ENCODE measurements at regions of chr2 and their contacts with region 1.

Region 1: GRCh38 chr2:102355526-102356380 is at the start of gene IL18R1:
- DNase-seq: peak; percentile 68
- H3K4me3 Mint-ChIP-seq: peak within 1 kb of the TSS; percentile 98
- H3K27ac Mint-ChIP-seq: peak within 1 kb of the TSS; percentile 93
- H3K4me1 Mint-ChIP-seq: peaks cover 45% of the 10 kb centered on the region
- H3K27me3 Mint-ChIP-seq: no peaks in the 10 kb centered on the region
- total RNA-seq, gene IL18R1: 61.9 and 68.2 TPM in 2 replicates

Region 2: DNA sequence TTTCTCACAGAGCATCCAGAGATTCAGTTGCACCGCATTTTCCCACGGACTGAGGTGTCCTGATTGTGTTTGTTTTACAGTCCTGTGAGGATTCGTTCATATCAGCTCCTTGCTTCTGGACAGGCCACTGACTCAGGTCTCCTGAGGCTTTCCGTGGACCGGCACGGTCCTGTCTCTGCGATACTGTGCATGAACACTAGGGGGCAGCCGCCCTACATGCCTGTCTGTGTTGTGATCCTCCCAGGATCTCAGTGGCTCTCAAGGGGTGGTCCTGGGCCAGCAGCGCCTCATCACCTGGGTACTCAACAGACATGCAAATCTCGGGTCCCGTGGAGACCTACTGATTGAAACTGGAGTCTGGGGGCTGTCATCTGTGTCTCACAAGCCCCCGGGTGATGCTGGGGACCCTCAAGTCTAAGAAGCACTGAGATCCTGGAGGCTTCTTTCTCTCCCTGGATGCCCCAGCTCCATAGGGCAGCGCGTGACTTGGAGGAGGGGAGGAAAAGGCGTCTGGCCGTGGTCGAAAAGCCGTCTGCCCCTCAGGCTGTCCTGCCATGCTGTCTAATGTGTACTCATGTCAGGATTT is 335.1 kb before region 1 on chr2:
- intact Hi-C with region 1: loop called (anchors 2 kb)
- DNase-seq: peak; percentile 66
- H3K4me3 Mint-ChIP-seq: no peak overlapping the region
- H3K27ac Mint-ChIP-seq: no peak overlapping the region
- H3K4me1 Mint-ChIP-seq: peaks cover 12% of the 10 kb centered on the region
- H3K27me3 Mint-ChIP-seq: peaks cover 4% of the 10 kb centered on the region

Region 3: GRCh38 chr2:102301867-102302362 is 53.8 kb before region 1 on chr2:
- intact Hi-C with region 1: loop called (anchors 1 kb)
- DNase-seq: peak; percentile 55
- H3K4me3 Mint-ChIP-seq: peak overlapping the region; percentile 59
- H3K27ac Mint-ChIP-seq: peak overlapping the region; percentile 96
- H3K4me1 Mint-ChIP-seq: peaks cover 76% of the 10 kb centered on the region
- H3K27me3 Mint-ChIP-seq: no peaks in the 10 kb centered on the region

Region 4: DNA sequence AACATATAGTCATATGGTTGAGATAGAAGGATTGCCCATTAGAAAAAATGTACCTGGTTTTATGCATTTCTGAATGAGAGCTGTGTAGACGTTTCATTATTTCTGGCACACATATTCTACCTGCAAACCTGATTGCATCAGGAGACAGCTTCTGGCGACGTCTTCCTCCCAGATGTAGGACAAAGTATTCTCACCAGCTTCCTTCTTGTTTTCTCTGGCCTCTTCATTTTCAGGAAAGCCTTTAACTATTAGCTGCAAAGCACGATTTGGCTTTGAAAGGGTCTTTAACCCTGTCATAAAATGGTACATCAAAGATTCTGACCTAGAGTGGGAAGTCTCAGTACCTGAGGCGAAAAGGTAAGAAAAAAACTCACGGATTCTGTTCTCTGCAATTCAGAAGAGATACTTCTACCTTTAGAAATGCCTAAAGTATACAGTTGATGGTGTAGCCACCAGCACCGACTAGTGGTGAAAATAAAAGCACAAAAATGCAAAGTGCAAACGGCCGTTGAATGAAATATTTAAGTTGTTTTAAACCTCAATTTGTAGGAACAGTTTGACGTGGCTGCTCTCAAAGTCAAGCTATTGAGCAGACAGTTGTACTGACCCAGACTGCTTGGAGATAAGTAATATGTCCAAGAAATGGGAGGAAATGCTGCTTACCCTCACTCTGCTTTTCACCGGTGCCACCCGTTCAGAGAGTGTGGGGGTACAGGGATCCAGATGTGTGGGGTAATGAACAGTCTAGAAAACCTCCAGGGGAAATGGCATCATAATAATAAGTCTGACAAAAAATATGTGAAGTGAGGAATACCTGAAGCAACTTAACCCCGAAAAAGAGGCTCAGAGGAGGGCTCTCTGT is 87.4 kb after region 1 on chr2:
- intact Hi-C with region 1: loop called (anchors 2 kb)
- DNase-seq: peak; percentile 21
- H3K4me3 Mint-ChIP-seq: peak overlapping the region; percentile 33
- H3K27ac Mint-ChIP-seq: peak overlapping the region; percentile 47
- H3K4me1 Mint-ChIP-seq: peaks cover 13% of the 10 kb centered on the region
- H3K27me3 Mint-ChIP-seq: no peaks in the 10 kb centered on the region

Region 5: GRCh38 chr2:102449370-102449974 is 93.7 kb after region 1 on chr2:
- intact Hi-C with region 1: loop called (anchors 1 kb)
- DNase-seq: peak; percentile 50
- H3K4me3 Mint-ChIP-seq: no peak overlapping the region
- H3K27ac Mint-ChIP-seq: no peak overlapping the region
- H3K4me1 Mint-ChIP-seq: peaks cover 8% of the 10 kb centered on the region
- H3K27me3 Mint-ChIP-seq: no peaks in the 10 kb centered on the region